IMR-90 (cell line): ENCODE measurements at regions of chr11 and their contacts with region 1.

Region 1: DNA sequence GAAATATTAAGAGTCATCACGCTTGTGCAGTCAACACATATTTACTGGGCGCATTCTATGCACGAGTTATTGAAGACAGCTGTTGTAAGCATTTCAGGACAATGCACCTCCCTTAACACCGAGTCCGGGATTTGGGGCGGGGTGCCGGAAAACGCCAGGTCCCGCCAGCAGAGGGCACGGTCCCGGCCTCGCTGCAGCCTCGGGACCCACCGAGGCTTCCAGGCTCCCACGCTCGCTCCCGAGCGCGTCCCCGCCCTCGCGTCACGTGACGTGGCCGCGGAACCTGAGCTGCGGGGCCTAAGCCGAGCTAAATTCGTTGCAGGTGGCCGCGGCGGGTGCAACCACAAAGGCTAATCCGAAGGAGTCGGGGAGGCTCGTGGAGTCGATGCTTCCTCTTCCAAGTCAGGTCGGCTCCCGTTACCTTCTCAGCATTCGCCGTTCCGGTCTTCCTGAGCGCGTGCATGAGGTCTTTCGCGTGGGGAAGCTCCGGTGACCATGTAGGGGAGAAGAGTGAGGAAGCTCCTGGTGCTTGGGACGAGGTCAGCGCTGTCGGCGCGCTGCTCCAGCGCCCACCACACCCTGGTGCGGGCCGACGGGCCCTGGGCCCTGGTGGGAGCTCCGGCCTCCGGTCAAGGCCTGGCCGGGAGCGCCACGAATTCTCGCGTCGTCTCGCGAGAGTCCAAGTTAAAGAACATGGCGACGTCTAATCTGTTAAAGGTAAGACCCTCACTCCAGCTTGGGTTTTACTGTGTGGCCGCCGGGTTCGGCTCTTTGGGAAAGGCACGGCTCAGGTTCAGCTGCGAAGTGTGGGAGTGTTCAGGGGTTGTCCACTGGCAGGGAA is at the start of gene CUL5:
- DNase-seq: peak; percentile 91
- ATAC-seq: peak; percentile 93
- H3K4me3 ChIP-seq: peak within 1 kb of the TSS; percentile 93
- H3K27ac ChIP-seq: peak within 1 kb of the TSS; percentile 94
- H3K4me1 ChIP-seq: no peaks in the 10 kb centered on the region
- H3K27me3 ChIP-seq: no peaks in the 10 kb centered on the region
- CTCF ChIP-seq: peak; percentile 85
- POLR2A ChIP-seq: peak; percentile 94
- RAD21 ChIP-seq: peak; percentile 66
- total RNA-seq, gene CUL5: 31.0 and 49.7 TPM in 2 replicates

Region 2: GRCh38 chr11:107438148-107438547 is 570.7 kb before region 1 on chr11:
- CTCF ChIA-PET with region 1: no interaction called
- POLR2A ChIA-PET with region 1: no interaction called
- dilution Hi-C with region 1: no loop called
- in situ Hi-C with region 1: no loop called
- intact Hi-C with region 1: no loop called
- DNase-seq: no peak
- ATAC-seq: no peak
- H3K4me3 ChIP-seq: no peak overlapping the region
- H3K27ac ChIP-seq: no peak overlapping the region
- H3K4me1 ChIP-seq: no peaks in the 10 kb centered on the region
- H3K27me3 ChIP-seq: no peaks in the 10 kb centered on the region
- CTCF ChIP-seq: no peak
- POLR2A ChIP-seq: no peak
- RAD21 ChIP-seq: no peak

Region 3: GRCh38 chr11:108037636-108038035 is 28.8 kb after region 1 on chr11:
- CTCF ChIA-PET with region 1: interaction called, 4 read pairs
- POLR2A ChIA-PET with region 1: interaction called, 5 read pairs
- dilution Hi-C with region 1: no loop called
- in situ Hi-C with region 1: no loop called
- intact Hi-C with region 1: loop called (anchors 2 kb)
- DNase-seq: peak; percentile 55
- ATAC-seq: peak; percentile 80
- H3K4me3 ChIP-seq: no peak overlapping the region
- H3K27ac ChIP-seq: peak overlapping the region; percentile 66; the same call in 1 of the 2 replicates
- H3K4me1 ChIP-seq: peaks cover 17% of the 10 kb centered on the region
- H3K27me3 ChIP-seq: no peaks in the 10 kb centered on the region
- CTCF ChIP-seq: no peak
- POLR2A ChIP-seq: no peak
- RAD21 ChIP-seq: no peak

Region 4: DNA sequence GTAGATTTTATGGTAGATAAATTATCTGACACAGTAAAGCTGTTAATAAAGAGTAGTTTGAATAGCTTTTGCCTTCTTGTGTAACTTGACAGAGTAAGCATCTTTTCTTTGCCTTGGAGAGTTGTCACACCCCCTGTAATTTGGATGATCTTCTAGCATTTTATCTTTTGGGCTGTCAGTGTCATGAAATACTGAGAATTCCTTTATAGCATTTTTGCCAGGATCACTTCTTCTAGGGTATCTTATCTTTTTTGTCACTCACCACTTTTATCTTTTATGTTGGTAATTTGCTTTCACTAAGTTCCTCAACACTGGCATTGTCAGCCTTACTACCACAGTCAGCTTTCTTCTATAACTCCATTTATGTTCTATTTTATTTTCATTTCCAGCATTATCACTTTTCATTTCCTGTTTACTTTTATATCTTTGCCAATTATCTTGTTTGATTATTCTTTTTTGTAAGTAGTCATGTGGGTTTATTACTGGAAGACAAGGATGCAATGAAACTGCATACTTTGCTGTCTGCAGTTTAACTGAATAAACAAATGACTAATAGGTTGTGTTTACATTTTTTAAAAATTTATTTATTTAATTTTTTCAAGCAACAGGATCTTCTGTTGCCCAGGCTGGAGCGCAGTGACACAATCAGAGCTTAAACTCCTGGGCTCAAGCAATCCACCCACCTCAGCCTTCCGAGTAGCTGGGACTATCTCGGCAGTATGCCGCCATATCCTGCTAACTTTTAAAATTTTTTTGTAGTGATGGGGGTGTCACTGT is 84.4 kb after region 1 on chr11:
- CTCF ChIA-PET with region 1: interaction called, 9 read pairs
- POLR2A ChIA-PET with region 1: no interaction called
- dilution Hi-C with region 1: no loop called
- in situ Hi-C with region 1: no loop called
- intact Hi-C with region 1: loop called (anchors 5 kb)
- DNase-seq: peak; percentile 78
- ATAC-seq: peak; percentile 90
- H3K4me3 ChIP-seq: no peak overlapping the region
- H3K27ac ChIP-seq: peak overlapping the region; percentile 65
- H3K4me1 ChIP-seq: peaks cover 4% of the 10 kb centered on the region; the same call in 1 of the 2 replicates
- H3K27me3 ChIP-seq: no peaks in the 10 kb centered on the region
- CTCF ChIP-seq: no peak
- POLR2A ChIP-seq: no peak
- RAD21 ChIP-seq: no peak

Region 5: DNA sequence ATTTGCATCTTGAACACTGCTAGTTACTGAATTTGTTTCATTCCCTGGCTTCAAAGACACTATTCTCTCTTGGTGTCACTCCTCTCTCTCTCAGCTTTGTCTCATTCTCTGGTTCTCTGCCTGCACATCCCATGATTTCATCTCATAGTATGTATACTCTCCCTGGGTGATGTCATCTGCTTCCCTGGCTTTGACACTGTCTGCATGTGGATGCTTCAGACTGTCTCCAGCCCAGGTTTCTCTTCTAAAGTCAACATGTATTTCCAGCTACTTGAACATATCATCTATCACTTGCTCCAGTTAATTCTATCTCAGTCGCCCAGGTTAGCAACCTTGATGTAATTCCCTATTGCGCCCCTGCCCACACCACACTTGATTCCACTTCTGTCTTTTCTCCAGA is 103.2 kb after region 1 on chr11:
- CTCF ChIA-PET with region 1: no interaction called
- POLR2A ChIA-PET with region 1: no interaction called
- dilution Hi-C with region 1: no loop called
- in situ Hi-C with region 1: no loop called
- intact Hi-C with region 1: loop called (anchors 5 kb)
- DNase-seq: peak; percentile 86
- ATAC-seq: peak; percentile 77
- H3K4me3 ChIP-seq: no peak overlapping the region
- H3K27ac ChIP-seq: no peak overlapping the region
- H3K4me1 ChIP-seq: peaks cover 7% of the 10 kb centered on the region
- H3K27me3 ChIP-seq: no peaks in the 10 kb centered on the region
- CTCF ChIP-seq: no peak
- POLR2A ChIP-seq: no peak
- RAD21 ChIP-seq: no peak

Region 6: GRCh38 chr11:108170184-108170583 is 161.3 kb after region 1 on chr11:
- CTCF ChIA-PET with region 1: no interaction called
- POLR2A ChIA-PET with region 1: no interaction called
- dilution Hi-C with region 1: no loop called
- in situ Hi-C with region 1: no loop called
- intact Hi-C with region 1: no loop called
- DNase-seq: no peak
- ATAC-seq: no peak
- H3K4me3 ChIP-seq: no peak overlapping the region
- H3K27ac ChIP-seq: no peak overlapping the region
- H3K4me1 ChIP-seq: no peaks in the 10 kb centered on the region
- H3K27me3 ChIP-seq: no peaks in the 10 kb centered on the region
- CTCF ChIP-seq: no peak
- POLR2A ChIP-seq: no peak
- RAD21 ChIP-seq: no peak

Region 7: GRCh38 chr11:108654994-108655631 is 646.2 kb after region 1 on chr11:
- CTCF ChIA-PET with region 1: no interaction called
- POLR2A ChIA-PET with region 1: no interaction called
- dilution Hi-C with region 1: no loop called
- in situ Hi-C with region 1: loop called (anchors 10 kb)
- intact Hi-C with region 1: no loop called
- DNase-seq: peak; percentile 56
- ATAC-seq: peak; percentile 37; the same call in 1 of the 2 replicates
- H3K4me3 ChIP-seq: no peak overlapping the region
- H3K27ac ChIP-seq: no peak overlapping the region
- H3K4me1 ChIP-seq: no peaks in the 10 kb centered on the region
- H3K27me3 ChIP-seq: no peaks in the 10 kb centered on the region
- CTCF ChIP-seq: peak; percentile 76
- POLR2A ChIP-seq: no peak
- RAD21 ChIP-seq: peak; percentile 83